Astrocyte of the cerebellum (primary cell): ENCODE measurements at regions of chr20 and their contacts with region 1.

Region 1: DNA sequence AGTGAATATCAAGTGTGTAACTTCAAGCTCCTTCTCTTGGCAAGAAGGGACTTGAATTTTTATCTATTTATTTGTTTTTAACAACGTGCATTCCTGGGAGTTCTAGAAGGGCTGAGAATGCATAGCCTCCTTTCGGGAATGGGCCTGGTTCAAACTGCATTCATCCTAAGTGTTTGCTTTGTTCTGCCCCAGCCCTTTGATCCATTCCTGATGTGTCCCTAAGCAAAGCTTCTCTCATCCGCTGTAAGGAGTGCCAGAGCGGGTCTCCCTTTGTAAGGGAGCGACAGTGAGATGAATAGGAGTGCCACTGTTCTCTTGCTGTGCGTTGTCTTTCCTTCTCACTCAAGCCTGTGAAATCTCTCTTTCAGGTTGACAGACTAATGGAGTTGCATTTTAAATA is 61.0 kb upstream of the VSTM2L start:
- DNase-seq: no peak
- H3K4me3 ChIP-seq: no peak overlapping the region
- CTCF ChIP-seq: no peak

Region 2: GRCh38 chr20:37789408-37789807 is 52.6 kb before region 1 on chr20:
- in situ Hi-C with region 1: loop called (anchors 5 kb)
- DNase-seq: no peak
- H3K4me3 ChIP-seq: no peak overlapping the region
- CTCF ChIP-seq: no peak

Region 3: GRCh38 chr20:37878835-37879599 is 37.0 kb after region 1 on chr20:
- in situ Hi-C with region 1: loop called (anchors 5 kb)
- DNase-seq: no peak
- H3K4me3 ChIP-seq: no peak overlapping the region
- CTCF ChIP-seq: no peak